Heart left ventricle (tissue), 16 donors: ENCODE measurements at regions of chr14 and their contacts with region 1.

Region 1: DNA sequence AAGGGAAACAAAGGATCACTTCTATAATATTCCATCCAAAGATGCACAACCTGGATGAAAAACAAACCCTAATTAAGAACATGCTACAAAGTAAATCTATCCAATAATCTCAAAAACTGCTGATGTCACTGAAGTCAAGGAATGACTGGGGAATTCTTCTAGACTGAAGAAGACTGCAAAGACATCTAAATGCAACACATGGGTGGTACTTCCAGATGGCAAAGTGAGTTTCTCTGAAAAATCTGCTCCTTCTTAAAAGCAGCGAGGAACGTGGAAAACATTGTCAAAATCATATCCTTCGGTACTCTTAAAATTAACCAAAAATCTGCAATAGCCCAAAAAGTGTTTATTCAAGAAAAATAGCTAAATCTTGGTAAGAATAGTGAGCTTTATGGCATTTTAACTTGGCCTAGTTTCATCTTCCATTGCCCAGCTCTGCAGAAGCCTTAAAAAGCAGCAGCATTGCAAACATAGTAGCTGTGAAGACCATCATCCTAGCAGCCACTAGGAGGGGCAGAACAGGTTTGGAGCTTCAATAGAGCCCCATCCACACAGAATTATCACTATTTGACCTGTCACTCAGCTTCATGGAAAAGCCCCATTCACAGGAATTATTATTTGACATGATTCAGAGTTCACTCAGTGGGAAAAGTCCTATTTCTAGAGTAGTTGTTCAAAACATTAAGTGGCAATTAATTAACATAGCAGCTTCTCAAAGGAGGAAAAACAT is 7.4 kb downstream of the CLEC14A start:
- DNase-seq: no peak
- ATAC-seq: peak in 1 of 4 donors; percentile 39
- H3K4me3 ChIP-seq: peak overlapping the region in 6 of 12 donors; percentile 69 to 79 (median 73)
- H3K27ac ChIP-seq: no peak overlapping the region
- H3K4me1 ChIP-seq: peaks cover 0 to 17% (median 0%) of the 10 kb centered on the region in 12 donors
- H3K27me3 ChIP-seq: peaks cover 0 to 3% (median 0%) of the 10 kb centered on the region in 9 donors
- CTCF ChIP-seq: peak in 7 of 12 donors; percentile 8 to 35 (median 17)
- POLR2A ChIP-seq: no peak

Region 2: DNA sequence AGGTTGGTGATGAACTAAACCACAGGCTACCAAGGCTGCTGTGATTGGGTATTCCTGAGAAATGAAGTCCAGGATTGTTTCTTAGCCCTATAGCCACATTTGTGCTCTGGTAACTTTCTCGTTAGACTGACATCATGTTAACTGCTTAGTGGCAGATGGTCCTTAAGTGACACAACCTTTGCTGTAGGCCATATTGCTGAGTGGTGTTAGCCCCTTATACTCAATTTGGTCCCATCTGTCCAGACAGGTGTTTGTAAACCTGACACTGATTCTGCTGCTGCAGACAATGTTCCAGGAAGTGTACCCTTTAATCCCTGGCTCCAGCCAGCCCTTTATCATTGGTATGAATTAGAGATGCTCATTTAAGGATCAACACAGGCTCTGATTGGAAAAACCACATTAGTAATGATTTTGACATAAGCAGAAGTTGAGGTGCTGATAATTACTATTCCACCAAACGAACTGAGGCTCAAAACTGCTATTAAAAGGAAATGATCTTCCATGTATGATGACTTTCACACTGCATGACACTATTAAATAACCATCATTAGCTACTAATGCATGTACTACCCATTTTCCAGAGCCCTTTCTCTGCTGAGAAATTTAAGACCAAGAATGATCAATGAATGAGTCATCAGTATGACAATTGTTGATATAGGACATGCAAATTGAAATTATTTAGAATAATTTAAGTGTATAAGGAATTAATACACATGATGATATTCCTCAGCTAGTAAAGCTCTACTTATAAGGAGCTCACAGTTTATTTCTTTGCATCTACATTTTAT is 44.4 kb before region 1 on chr14:
- intact Hi-C with region 1: no loop called
- DNase-seq: no peak
- ATAC-seq: no peak
- H3K4me3 ChIP-seq: no peak overlapping the region
- H3K27ac ChIP-seq: no peak overlapping the region
- H3K4me1 ChIP-seq: peaks cover 0 to 14% (median 0%) of the 10 kb centered on the region in 12 donors
- H3K27me3 ChIP-seq: peaks cover 0 to 23% (median 13%) of the 10 kb centered on the region in 9 donors
- CTCF ChIP-seq: no peak
- POLR2A ChIP-seq: no peak

Region 3: GRCh38 chr14:38366374-38366773 is 117.9 kb after region 1 on chr14:
- intact Hi-C with region 1: loop called in 2 of 10 experiments (anchors 5 to 10 kb)
- DNase-seq: no peak
- ATAC-seq: peak in 2 of 4 donors; percentile 50 to 60
- H3K4me3 ChIP-seq: no peak overlapping the region
- H3K27ac ChIP-seq: peak overlapping the region in 3 of 12 donors; percentile 12 to 70 (median 50)
- H3K4me1 ChIP-seq: peaks cover 0 to 24% (median 4%) of the 10 kb centered on the region in 12 donors
- H3K27me3 ChIP-seq: no peaks in the 10 kb centered on the region
- CTCF ChIP-seq: no peak
- POLR2A ChIP-seq: no peak